ENCODE measurements at regions of chr9 and their contacts with region 1.

Region 1: DNA sequence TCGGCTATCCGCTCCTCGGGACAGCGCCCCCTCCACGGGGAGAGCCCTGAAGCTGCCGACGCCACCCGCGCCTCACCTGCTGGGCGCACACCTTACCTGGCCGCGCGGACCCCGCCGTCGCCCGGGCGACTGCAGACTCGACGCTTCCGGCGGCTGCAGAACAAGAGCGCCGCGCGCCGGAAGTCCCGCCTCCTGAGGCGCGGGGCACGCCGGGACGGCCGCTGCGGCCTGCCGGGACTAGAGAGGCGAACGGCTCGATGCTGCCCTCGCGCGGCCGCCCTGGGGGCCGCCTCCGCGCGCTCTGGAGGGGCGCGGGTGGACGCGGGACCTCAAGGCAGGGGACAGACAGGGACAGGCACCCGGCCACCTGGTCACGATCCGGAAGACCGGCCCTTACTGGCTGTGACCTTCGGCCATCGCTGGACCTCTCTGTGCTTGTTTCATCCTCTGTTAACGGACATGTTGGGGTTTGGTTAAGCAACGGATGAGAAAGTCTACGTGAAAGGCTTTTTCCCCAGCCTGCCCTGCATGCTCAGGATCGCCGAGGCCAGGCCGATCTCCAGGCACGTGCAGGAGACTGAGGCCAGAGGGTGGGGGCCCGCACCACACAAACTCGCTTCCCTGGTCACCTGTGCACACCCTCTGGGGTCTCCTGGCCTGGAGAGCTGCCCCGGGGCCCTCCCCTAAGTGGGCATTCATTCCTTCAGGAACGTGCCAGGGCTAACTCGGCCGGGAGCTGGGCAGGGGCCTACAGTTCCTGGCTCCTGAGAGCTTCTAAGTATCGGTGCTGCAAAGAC is at the start of gene SNAPC4:
- DNase-seq: peak; percentile 80 to 87
- ATAC-seq: peak; percentile 84 to 95
- H3K4me3 ChIP-seq: peak within 1 kb of the TSS; percentile 100
- H3K27ac ChIP-seq: peak within 1 kb of the TSS; percentile 98 to 99
- H3K4me1 ChIP-seq: peaks cover 14% of the 10 kb centered on the region; the same call in 2 of the 3 replicates
- CTCF ChIP-seq: peak; percentile 93
- EP300 ChIP-seq: no peak
- POLR2A ChIP-seq: peak; percentile 92
- RAD21 ChIP-seq: peak; percentile 54 to 80; a peak in 4 of 5 replicates
- polyA plus RNA-seq, gene SNAPC4: 2.7 and 3.1 TPM in 2 replicates

Region 2: GRCh38 chr9:136079211-136079915 is 320.9 kb before region 1 on chr9:
- CTCF ChIA-PET with region 1: no interaction called
- POLR2A ChIA-PET with region 1: no interaction called
- DNase-seq: no peak
- ATAC-seq: peak; percentile 51 to 61
- H3K4me3 ChIP-seq: no peak overlapping the region
- H3K27ac ChIP-seq: peak overlapping the region; percentile 52 to 77; a peak in 5 of 6 replicates
- H3K4me1 ChIP-seq: peaks cover 31% of the 10 kb centered on the region
- CTCF ChIP-seq: no peak
- EP300 ChIP-seq: no peak
- POLR2A ChIP-seq: no peak
- RAD21 ChIP-seq: 0 out of 5 replicates have a peak, but pooled peaks of 1 of the 2 experiments have one; percentile 10

Region 3: GRCh38 chr9:136339173-136339957 is 60.9 kb before region 1 on chr9:
- CTCF ChIA-PET with region 1: interaction called, 11 read pairs
- POLR2A ChIA-PET with region 1: no interaction called
- DNase-seq: peak; percentile 74 to 79
- ATAC-seq: peak; percentile 67 to 92
- H3K4me3 ChIP-seq: no peak overlapping the region
- H3K27ac ChIP-seq: no peak overlapping the region
- H3K4me1 ChIP-seq: 0 out of 3 replicates have a peak, but pooled peaks cover 3% of the 10 kb centered on the region
- CTCF ChIP-seq: peak; percentile 91
- EP300 ChIP-seq: no peak
- POLR2A ChIP-seq: no peak
- RAD21 ChIP-seq: peak; percentile 68 to 72

Region 4: GRCh38 chr9:136345281-136346156 is 54.7 kb before region 1 on chr9:
- CTCF ChIA-PET with region 1: interaction called, 19 read pairs
- POLR2A ChIA-PET with region 1: no interaction called
- DNase-seq: peak; percentile 52 to 57
- ATAC-seq: peak; percentile 70 to 87
- H3K4me3 ChIP-seq: no peak overlapping the region
- H3K27ac ChIP-seq: peak overlapping the region in 1 of 2 experiments; percentile 73; a peak in 3 of 6 replicates
- H3K4me1 ChIP-seq: peaks cover 8% of the 10 kb centered on the region; the same call in 2 of the 3 replicates
- CTCF ChIP-seq: peak; percentile 34; the same call in 2 of the 3 replicates
- EP300 ChIP-seq: no peak
- POLR2A ChIP-seq: no peak
- RAD21 ChIP-seq: peak; percentile 36 to 52

Region 5: DNA sequence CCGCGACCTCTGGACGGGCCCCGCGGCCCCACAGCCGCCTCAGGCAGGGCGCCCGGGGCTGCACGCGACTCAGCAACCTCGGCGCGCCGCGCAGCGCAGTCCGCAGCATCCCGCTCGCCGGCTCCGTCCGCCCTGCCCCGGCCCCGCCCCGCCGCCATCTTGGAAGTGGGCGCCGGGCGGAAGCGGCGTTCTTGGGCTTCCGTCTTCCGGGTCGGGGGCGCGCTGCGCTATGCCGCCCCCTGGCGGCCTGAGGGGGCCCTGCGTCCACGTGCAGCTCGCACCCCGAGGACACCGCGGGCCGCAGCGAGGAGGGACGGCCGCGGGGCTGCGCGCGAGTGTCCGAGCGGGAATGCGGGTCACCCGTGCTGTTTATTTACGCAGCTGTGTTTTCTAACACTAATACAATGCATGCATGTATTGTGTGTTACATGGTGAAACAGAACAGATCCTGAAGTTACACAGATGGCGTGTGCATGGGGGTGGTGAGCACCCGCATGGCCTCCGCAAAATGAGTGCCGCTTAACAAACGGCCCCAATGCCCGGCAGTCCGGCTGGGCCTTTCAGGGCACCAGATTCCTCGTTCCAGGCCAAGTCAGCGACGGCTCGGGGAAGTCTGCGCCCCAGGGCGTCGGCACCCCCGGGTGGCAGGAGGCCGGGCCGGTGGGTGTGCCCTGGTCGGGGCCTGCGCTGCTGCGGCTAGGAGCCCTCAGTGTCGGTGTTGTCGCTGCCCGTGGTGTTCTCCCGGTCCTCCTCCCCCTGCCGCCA is 36.4 kb before region 1 on chr9 and contains the start of gene DNLZ:
- CTCF ChIA-PET with region 1: interaction called, 15 read pairs
- POLR2A ChIA-PET with region 1: interaction called, 33 read pairs
- DNase-seq: peak; percentile 87
- ATAC-seq: peak; percentile 54 to 62
- H3K4me3 ChIP-seq: peak within 1 kb of the TSS; percentile 88
- H3K27ac ChIP-seq: peak within 1 kb of the TSS; percentile 96 to 98
- H3K4me1 ChIP-seq: peaks cover 13% of the 10 kb centered on the region; the same call in 2 of the 3 replicates
- CTCF ChIP-seq: peak; percentile 97
- EP300 ChIP-seq: no peak
- POLR2A ChIP-seq: peak; percentile 60
- RAD21 ChIP-seq: peak in 1 of 2 experiments; percentile 53; a peak in 4 of 5 replicates
- polyA plus RNA-seq, gene DNLZ: 5.1 and 8.0 TPM in 2 replicates

Region 6: GRCh38 chr9:136385015-136385414 is 15.2 kb before region 1 on chr9:
- CTCF ChIA-PET with region 1: interaction called, 100 read pairs
- POLR2A ChIA-PET with region 1: interaction called, 3 read pairs
- DNase-seq: no peak
- ATAC-seq: no peak
- H3K4me3 ChIP-seq: no peak overlapping the region
- H3K27ac ChIP-seq: no peak overlapping the region
- H3K4me1 ChIP-seq: no peaks in the 10 kb centered on the region
- CTCF ChIP-seq: no peak
- EP300 ChIP-seq: no peak
- POLR2A ChIP-seq: no peak
- RAD21 ChIP-seq: no peak

Region 7: DNA sequence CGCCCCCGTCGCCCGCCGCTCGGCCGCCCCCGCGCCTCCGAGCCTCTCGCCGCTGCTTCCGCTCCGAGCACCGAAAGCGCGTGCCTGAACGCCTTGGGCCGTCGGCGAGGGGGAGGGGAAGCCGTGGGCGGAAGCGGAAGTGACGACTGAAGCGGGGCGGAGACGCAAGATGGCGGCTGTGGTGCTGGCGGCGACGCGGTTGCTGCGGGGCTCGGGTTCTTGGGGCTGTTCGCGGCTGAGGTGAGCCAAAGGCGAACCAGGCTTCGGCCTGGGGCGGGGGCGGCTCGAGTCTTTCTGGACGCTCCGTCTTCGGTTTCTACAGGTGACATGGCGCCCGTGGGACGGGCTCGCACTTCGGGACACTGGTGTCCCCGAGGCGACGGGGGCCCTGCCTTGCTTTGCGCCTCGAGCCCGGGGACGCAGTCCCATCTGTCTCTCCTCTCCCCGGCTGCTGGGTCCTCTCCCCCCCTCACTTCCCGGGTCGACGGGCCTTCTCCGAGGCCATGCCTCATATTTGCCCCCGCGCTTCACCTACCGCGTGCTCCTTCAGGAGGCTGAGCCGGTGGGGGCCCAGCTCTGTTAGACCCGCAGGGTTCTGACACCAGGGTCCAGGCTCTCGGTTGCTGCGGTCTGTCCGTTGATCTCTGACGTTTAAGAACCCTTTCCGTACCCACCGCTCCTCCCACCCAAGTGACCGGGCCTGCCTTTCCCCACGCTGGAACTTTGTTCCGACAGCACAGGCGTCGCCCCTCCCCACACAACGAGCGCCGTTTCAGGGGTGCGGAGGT is 10.5 kb after region 1 on chr9 and contains the starts of genes ENTR1 and PMPCA:
- CTCF ChIA-PET with region 1: interaction called, 19 read pairs
- POLR2A ChIA-PET with region 1: interaction called, 4 read pairs
- DNase-seq: peak; percentile 90 to 93
- ATAC-seq: peak; percentile 86 to 91
- H3K4me3 ChIP-seq: peak within 1 kb of the TSS; percentile 78
- H3K27ac ChIP-seq: peak within 1 kb of the TSS; percentile 91 to 95
- H3K4me1 ChIP-seq: peaks cover 19% of the 10 kb centered on the region
- CTCF ChIP-seq: no peak
- EP300 ChIP-seq: no peak
- POLR2A ChIP-seq: peak; percentile 95
- RAD21 ChIP-seq: no peak
- polyA plus RNA-seq, gene ENTR1: 69.0 and 75.8 TPM in 2 replicates
- polyA plus RNA-seq, gene PMPCA: 53.4 and 71.1 TPM in 2 replicates